PC-3 (cell line): ENCODE measurements at regions of chr1 and their contacts with region 1.

Region 1: GRCh38 chr1:20574686-20575540 is 14.0 kb upstream of the CDA start:
- DNase-seq: peak; percentile 87
- ATAC-seq: peak; percentile 64
- H3K4me3 ChIP-seq: no peak overlapping the region
- H3K27ac ChIP-seq: no peak overlapping the region
- H3K4me1 ChIP-seq: peaks cover 38% of the 10 kb centered on the region
- H3K27me3 ChIP-seq: no peaks in the 10 kb centered on the region
- CTCF ChIP-seq: peak; percentile 89

Region 2: DNA sequence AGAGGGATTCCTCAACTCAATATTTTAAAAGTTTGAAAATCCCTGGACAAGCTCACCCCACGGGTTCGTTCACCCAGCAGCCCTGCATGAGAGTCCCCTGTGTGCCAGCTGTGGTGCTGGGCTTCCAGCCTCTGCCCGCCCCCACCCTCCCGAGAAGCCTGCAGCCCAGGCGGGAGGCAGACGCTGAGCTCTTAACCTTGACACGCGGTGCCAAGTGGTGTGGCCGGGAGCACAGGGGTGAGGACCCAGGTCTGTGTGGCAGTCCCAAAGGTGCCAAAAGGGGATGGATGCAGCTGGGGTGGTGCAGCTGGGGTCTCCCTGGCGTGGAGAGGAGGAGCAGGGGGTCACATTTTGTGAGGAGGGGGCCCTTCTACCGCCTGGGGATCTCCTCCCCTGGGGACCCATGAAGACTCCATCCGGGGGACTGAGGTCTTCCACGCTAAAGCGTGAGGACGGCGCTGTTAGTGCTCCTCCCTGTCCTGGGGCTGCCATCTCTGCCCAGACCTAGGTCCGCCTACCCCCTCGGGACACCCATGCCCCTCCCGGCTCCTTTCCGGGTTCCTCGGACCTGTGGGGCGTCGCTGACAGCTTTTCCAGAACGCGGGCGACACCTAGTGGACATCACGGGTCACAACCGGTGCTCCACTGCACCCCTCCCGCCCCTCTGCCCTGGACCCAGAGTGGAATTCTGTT is 422.9 kb before region 1 on chr1:
- CTCF ChIA-PET with region 1: no interaction called
- POLR2A ChIA-PET with region 1: no interaction called
- intact Hi-C with region 1: no loop called
- DNase-seq: peak; percentile 80
- ATAC-seq: peak; percentile 95
- H3K4me3 ChIP-seq: peak overlapping the region; percentile 66
- H3K27ac ChIP-seq: no peak overlapping the region
- H3K4me1 ChIP-seq: 0 out of 2 replicates have a peak, but pooled peaks cover 5% of the 10 kb centered on the region
- H3K27me3 ChIP-seq: no peaks in the 10 kb centered on the region
- CTCF ChIP-seq: peak; percentile 89

Region 3: GRCh38 chr1:20329793-20330542 is 244.9 kb before region 1 on chr1:
- CTCF ChIA-PET with region 1: interaction called, 19 read pairs
- POLR2A ChIA-PET with region 1: no interaction called
- intact Hi-C with region 1: no loop called
- DNase-seq: no peak
- ATAC-seq: no peak
- H3K4me3 ChIP-seq: no peak overlapping the region
- H3K27ac ChIP-seq: no peak overlapping the region
- H3K4me1 ChIP-seq: no peaks in the 10 kb centered on the region
- H3K27me3 ChIP-seq: no peaks in the 10 kb centered on the region
- CTCF ChIP-seq: peak; percentile 47

Region 4: DNA sequence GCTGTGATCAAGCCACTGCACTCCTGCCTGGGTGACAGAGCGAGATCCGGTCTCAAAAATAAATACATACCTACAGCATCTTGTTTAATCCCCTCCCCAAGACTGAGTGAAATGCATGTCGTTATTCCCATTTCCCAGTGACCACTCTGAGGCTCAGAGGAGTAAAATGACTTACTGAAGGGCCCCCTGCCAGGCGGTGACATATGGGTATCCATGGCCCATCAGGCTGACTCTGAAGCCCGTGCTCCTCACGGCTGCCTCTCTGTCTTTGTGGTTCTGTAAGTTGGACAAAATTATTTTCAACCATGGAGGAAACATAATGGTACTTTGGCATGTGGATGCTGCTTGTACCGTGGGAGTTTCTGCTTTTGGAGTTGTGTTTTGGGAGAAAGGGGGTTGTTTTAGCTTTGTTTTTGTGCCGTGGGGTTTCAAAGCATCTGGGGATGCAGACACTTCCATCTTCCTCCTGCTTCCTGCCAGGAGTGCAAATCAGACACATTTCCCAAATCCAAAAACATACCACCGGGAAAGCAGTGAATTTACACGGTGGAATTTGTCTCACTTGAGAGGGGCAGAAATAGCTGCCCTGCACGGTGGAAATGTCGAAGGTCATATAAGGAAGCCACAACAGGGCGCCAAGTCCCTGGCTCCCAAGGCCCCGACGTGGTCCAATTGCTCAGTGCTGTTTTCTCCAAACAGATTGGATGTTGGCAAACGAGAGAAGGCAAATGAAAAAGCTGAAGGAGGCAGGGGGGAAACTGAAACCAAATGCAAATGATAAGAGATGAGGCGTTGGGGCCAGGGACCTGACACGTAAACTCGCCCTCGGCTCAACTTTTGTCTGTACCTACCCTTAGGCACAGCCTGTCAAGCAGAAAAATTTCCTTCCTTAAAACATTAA is 41.3 kb after region 1 on chr1:
- CTCF ChIA-PET with region 1: no interaction called
- POLR2A ChIA-PET with region 1: no interaction called
- intact Hi-C with region 1: loop called (anchors 5 kb)
- DNase-seq: no peak
- ATAC-seq: no peak
- H3K4me3 ChIP-seq: no peak overlapping the region
- H3K27ac ChIP-seq: no peak overlapping the region
- H3K4me1 ChIP-seq: peaks cover 33% of the 10 kb centered on the region
- H3K27me3 ChIP-seq: no peaks in the 10 kb centered on the region
- CTCF ChIP-seq: no peak

Region 5: GRCh38 chr1:20633190-20634064 is 58.5 kb after region 1 on chr1 and contains the start of gene PINK1:
- CTCF ChIA-PET with region 1: interaction called, 22 read pairs
- POLR2A ChIA-PET with region 1: interaction called, 3 read pairs
- intact Hi-C with region 1: loop called (anchors 1 kb)
- DNase-seq: peak; percentile 81
- ATAC-seq: peak; percentile 89
- H3K4me3 ChIP-seq: peak within 1 kb of the TSS; percentile 74
- H3K27ac ChIP-seq: peak within 1 kb of the TSS; percentile 62
- H3K4me1 ChIP-seq: peaks cover 18% of the 10 kb centered on the region
- H3K27me3 ChIP-seq: no peaks in the 10 kb centered on the region
- CTCF ChIP-seq: peak; percentile 94
- total RNA-seq, gene PINK1: 129 and 160 TPM in 2 replicates

Region 6: DNA sequence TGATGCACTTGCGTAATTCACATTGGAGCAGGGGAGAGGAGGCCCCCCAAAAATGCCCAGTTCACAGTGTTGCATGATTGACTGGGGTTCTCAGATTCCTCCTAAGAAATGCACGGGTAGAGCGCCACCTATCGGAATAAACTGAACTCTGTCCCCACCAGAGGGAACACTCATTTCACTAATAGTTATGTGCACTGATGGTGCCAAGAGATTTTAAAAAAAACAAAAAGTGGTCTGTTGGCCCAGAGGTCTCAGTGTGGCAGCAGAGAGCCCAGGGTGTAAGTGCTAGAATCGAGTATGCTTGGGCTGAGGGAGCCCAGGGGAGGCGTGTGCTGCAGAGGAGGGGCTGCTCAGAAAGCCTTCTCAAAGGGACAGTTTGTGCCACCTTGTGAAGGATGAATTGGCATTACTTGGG is 65.3 kb after region 1 on chr1:
- CTCF ChIA-PET with region 1: no interaction called
- POLR2A ChIA-PET with region 1: no interaction called
- intact Hi-C with region 1: loop called (anchors 2 kb)
- DNase-seq: peak; percentile 74
- ATAC-seq: peak; percentile 79
- H3K4me3 ChIP-seq: no peak overlapping the region
- H3K27ac ChIP-seq: no peak overlapping the region
- H3K4me1 ChIP-seq: peaks cover 2% of the 10 kb centered on the region; the same call in 1 of the 2 replicates
- H3K27me3 ChIP-seq: no peaks in the 10 kb centered on the region
- CTCF ChIP-seq: peak; percentile 90

Region 7: DNA sequence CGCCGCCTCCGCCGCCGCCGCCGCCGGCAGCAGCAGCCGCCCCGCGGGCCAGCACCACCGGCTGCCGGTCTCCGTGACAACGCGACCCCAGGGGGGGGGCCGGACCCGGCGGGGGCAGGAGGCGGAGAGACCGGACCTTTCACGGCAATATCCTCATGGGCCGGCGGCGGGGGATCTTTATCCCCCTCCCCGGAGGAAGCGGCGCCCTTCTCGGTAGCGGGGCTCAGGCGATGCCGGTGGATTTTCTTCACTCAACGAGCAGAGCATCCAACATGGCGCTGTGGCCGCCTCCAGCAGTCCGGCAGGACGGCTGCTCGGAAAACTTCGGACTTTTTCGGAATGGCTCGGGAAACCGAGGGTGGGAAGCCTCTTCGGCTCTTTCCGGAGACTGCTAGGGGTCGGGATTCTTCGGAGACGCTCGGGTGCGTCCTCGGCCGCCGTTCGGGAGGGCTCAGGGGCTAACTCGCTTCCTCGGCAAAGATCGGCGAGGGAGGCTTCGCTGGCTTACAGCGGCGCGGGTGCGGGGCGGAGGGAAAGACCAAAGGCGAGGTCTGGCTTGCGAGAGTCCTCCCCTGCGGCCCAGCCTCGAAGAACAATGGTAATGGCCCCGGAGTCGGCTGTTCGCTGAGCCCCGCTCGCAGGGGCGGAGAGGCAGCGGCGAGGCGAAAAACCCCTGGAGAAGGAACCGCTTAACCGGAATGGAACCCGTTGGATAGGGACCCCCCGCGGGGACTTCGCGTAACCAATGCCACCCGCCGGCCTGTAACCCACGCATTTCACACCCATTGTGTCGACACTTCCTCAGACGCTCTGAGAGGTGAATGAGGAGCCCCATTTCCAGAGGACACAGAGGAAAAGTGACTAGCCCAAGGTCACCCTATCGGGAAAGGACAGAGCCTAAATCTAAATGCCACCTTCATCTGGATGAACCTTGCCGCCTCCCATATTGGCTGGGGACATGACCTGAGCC is 602.0 kb after region 1 on chr1 and contains the start of gene EIF4G3:
- CTCF ChIA-PET with region 1: no interaction called
- POLR2A ChIA-PET with region 1: no interaction called
- intact Hi-C with region 1: loop called (anchors 5 kb)
- DNase-seq: peak; percentile 99
- ATAC-seq: peak; percentile 97
- H3K4me3 ChIP-seq: peak within 1 kb of the TSS; percentile 91
- H3K27ac ChIP-seq: no peak within 1 kb of the TSS; the same call in 1 of the 2 replicates
- H3K4me1 ChIP-seq: peaks cover 13% of the 10 kb centered on the region
- H3K27me3 ChIP-seq: no peaks in the 10 kb centered on the region
- CTCF ChIP-seq: no peak
- total RNA-seq, gene EIF4G3: 16.9 and 25.0 TPM in 2 replicates